ENCODE measurements at regions of chr11 and their contacts with region 1.

Region 1: GRCh38 chr11:34174412-34175041 is 69.1 kb downstream of the NAT10 start:
- DNase-seq: peak; percentile 84 to 90 (median 88)
- ATAC-seq: peak; percentile 99
- H3K4me3 ChIP-seq: peak overlapping the region; percentile 16; the same call in 1 of the 2 replicates
- H3K27ac ChIP-seq: no peak overlapping the region
- H3K4me1 ChIP-seq: peaks cover 2 to 18% of the 10 kb centered on the region in 2 experiments; a peak in 3 of 5 replicates
- H3K27me3 ChIP-seq: peaks cover 27 to 58% of the 10 kb centered on the region in 2 experiments; a peak in 4 of 5 replicates
- CTCF ChIP-seq: peak; percentile 88 to 97 (median 94)
- EP300 ChIP-seq: no peak
- POLR2A ChIP-seq: no peak
- RAD21 ChIP-seq: peak; percentile 97 to 99

Region 2: DNA sequence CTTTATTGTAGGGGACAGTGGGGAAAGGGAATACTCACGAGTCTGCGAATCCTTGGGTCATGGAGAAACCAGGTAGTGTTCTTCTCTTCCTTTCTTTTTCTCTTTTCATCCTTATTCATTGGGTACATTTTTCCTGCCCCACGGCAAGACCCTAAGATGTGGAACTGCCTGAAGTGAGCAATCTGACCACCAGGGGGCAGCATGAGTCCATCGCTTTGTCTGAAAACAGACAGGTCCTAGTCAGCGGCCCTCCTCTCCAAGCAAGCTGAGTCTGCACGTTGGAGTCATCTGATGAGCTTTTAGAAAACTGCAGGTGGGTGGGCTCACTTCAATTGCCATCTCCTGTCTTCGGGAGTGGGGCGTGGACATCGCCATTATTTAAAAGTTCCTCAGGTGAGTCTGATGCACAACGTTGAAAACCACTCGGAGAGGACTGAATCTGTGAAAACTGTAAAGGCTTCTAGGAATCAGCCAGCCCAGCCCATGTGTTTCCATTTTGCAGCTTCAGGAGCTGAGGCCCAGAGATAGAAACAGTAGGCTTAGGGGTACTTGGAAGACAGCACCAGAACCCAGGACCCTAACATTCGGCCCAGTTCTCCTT is 366.2 kb before region 1 on chr11:
- CTCF ChIA-PET with region 1: no interaction called
- POLR2A ChIA-PET with region 1: no interaction called
- in situ Hi-C with region 1: no loop called
- intact Hi-C with region 1: loop called (anchors 10 kb)
- DNase-seq: peak; percentile 79 to 90 (median 80)
- ATAC-seq: peak; percentile 99
- H3K4me3 ChIP-seq: no peak overlapping the region
- H3K27ac ChIP-seq: no peak overlapping the region
- H3K4me1 ChIP-seq: no peaks in the 10 kb centered on the region
- H3K27me3 ChIP-seq: peaks cover 9% of the 10 kb centered on the region in 2 experiments; a peak in 4 of 5 replicates
- CTCF ChIP-seq: peak; percentile 82 to 92 (median 92)
- EP300 ChIP-seq: no peak
- POLR2A ChIP-seq: no peak
- RAD21 ChIP-seq: peak; percentile 77 to 87

Region 3: DNA sequence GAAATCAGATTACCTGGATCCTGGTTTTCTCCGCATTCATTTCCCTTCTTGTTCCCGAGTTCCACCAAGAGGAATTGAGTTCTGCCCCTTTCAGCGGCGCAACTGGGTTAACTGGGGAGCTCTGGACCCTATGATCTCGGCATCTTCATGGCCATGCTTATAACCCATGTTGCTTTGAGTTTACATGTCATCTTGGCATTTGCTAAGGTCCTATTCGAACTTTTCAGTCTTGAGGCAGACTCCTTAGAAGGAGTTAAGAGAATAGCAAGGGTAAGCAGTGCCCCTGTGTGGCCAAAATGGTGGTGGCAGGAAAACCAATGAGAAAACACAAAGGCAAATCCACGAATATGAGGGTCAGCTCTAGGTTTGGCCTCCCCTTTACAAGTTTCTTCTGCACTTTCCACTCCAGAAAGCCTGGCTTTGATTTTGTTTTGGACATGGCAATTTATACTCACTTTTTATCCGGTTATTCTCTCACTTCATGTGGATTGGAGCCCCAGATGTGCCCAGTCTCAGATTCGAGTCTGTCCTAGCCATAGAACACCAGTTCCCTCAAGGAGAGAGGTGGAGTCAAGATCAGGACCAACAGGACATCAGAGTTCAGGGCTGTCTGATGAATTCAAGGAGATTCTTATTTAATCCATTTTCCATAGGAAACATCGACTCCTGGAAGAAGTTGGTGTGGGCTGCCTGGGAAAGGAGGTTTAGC is 344.9 kb before region 1 on chr11:
- CTCF ChIA-PET with region 1: no interaction called
- POLR2A ChIA-PET with region 1: no interaction called
- in situ Hi-C with region 1: loop called (anchors 25 kb)
- intact Hi-C with region 1: loop called (anchors 10 kb)
- DNase-seq: peak; percentile 51 to 77 (median 64)
- ATAC-seq: peak; percentile 94
- H3K4me3 ChIP-seq: no peak overlapping the region
- H3K27ac ChIP-seq: no peak overlapping the region
- H3K4me1 ChIP-seq: peaks cover 0 to 9% of the 10 kb centered on the region in 2 experiments; a peak in 2 of 5 replicates
- H3K27me3 ChIP-seq: peaks cover 32 to 49% of the 10 kb centered on the region in 2 experiments
- CTCF ChIP-seq: peak; percentile 81 to 94 (median 86)
- EP300 ChIP-seq: no peak
- POLR2A ChIP-seq: no peak
- RAD21 ChIP-seq: peak; percentile 85 to 90

Region 4: DNA sequence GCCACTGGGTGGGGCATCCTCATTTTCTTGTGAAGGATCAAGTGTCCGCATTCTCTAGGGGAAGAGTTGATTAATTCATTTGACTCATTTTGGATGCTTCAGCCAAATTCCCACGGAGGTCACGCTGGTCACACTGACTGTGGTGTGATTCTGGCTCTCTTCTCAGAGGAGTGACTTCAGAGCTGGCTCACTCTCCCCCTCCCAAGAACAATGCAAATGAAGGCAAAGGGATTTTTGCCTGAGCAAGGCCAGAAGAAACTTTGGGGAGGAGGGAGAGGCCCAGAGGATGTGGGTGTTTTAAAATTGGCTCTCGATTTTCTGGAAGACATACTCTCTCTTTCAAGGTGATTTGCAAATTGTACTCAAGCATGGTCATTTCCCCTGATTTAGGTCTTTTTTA is 231.6 kb before region 1 on chr11:
- CTCF ChIA-PET with region 1: no interaction called
- POLR2A ChIA-PET with region 1: no interaction called
- in situ Hi-C with region 1: no loop called
- intact Hi-C with region 1: no loop called
- DNase-seq: peak in 1 of 4 experiments; percentile 63
- ATAC-seq: no peak
- H3K4me3 ChIP-seq: no peak overlapping the region
- H3K27ac ChIP-seq: peak overlapping the region; percentile 98
- H3K4me1 ChIP-seq: peaks cover 51 to 75% of the 10 kb centered on the region in 2 experiments
- H3K27me3 ChIP-seq: no peaks in the 10 kb centered on the region
- CTCF ChIP-seq: no peak
- EP300 ChIP-seq: no peak
- POLR2A ChIP-seq: no peak
- RAD21 ChIP-seq: no peak

Region 5: DNA sequence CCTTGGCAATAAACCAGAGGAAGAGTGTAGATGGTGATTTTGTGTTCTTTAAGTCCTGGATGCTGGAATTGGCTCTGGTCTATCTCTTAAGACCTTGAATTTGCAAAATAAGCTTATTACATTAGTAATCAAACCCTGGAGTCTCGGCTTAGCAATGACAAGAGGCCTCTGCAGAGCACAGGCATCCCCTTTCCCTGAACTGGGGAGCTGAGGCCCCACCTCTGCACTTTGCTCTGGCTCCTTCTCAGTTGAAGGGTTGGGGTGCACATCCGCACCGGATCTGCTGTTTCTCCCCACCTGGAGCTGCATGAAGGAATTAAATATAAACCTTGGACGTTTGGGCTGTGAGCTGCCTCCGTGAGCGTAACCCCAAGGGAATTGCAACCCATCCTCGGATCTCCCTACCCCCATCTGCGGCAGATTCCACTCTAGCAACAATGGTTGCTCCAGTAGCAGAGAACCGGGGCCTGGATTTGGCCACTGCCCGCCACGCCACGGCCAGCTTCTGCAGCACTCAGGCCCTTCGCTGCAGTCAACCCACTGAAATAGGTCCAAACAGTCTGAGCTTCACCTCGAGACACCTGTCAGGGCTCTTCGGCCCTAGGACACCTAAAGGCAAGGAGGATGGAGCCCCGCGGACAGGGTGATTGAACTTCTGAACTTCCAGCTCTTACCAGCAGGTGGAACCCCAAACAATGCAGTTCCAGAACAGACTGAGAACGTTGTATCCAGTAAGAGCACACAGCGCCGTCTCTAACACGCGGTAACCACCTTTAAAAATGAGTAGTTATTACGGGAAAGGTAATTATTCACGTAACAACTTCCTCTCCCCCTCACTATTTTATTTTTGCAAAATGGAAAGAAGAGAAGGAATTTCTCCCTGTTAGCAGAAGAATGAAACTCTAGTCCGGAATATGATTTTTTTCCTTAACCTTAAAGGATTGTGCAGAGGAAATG is 177.8 kb before region 1 on chr11:
- CTCF ChIA-PET with region 1: no interaction called
- POLR2A ChIA-PET with region 1: no interaction called
- in situ Hi-C with region 1: no loop called
- intact Hi-C with region 1: loop called (anchors 5 kb)
- DNase-seq: peak; percentile 71 to 88 (median 74)
- ATAC-seq: peak; percentile 99
- H3K4me3 ChIP-seq: no peak overlapping the region
- H3K27ac ChIP-seq: no peak overlapping the region
- H3K4me1 ChIP-seq: peaks cover 3 to 8% of the 10 kb centered on the region in 2 experiments; a peak in 3 of 5 replicates
- H3K27me3 ChIP-seq: no peaks in the 10 kb centered on the region
- CTCF ChIP-seq: peak; percentile 91 to 92 (median 91)
- EP300 ChIP-seq: no peak
- POLR2A ChIP-seq: no peak
- RAD21 ChIP-seq: peak; percentile 79 to 89

Region 6: GRCh38 chr11:34134765-34135164 is 39.8 kb before region 1 on chr11:
- CTCF ChIA-PET with region 1: no interaction called
- POLR2A ChIA-PET with region 1: no interaction called
- in situ Hi-C with region 1: no loop called
- intact Hi-C with region 1: no loop called
- DNase-seq: no peak
- ATAC-seq: no peak
- H3K4me3 ChIP-seq: no peak overlapping the region
- H3K27ac ChIP-seq: no peak overlapping the region
- H3K4me1 ChIP-seq: no peaks in the 10 kb centered on the region
- H3K27me3 ChIP-seq: no peaks in the 10 kb centered on the region
- CTCF ChIP-seq: no peak
- EP300 ChIP-seq: no peak
- POLR2A ChIP-seq: no peak
- RAD21 ChIP-seq: no peak

Region 7: DNA sequence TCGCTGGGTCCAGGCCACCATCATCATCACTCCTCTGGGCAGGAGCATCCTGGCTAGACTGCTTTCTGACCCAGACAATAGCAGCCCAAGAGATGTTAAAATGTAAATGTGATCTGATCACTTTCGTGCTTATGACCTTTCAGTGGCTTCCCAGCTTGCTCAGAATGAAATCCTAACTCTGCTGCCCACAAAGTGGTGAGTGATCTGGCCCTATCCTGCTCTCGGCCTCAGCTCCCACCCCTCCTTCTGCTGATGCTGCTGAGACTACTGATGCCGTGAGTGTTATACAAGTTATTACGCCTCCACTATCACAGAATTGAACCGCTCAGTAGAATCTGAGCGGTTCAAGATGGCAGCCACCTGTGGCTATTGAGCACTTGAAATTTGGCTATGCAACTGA is 312.9 kb after region 1 on chr11:
- CTCF ChIA-PET with region 1: interaction called, 6 read pairs
- POLR2A ChIA-PET with region 1: no interaction called
- in situ Hi-C with region 1: loop called (anchors 5 kb)
- intact Hi-C with region 1: loop called (anchors 1 kb)
- DNase-seq: no peak
- ATAC-seq: no peak
- H3K4me3 ChIP-seq: no peak overlapping the region
- H3K27ac ChIP-seq: no peak overlapping the region
- H3K4me1 ChIP-seq: no peaks in the 10 kb centered on the region
- H3K27me3 ChIP-seq: peaks cover 0 to 26% of the 10 kb centered on the region in 2 experiments; a peak in 3 of 5 replicates
- CTCF ChIP-seq: no peak
- EP300 ChIP-seq: no peak
- POLR2A ChIP-seq: no peak
- RAD21 ChIP-seq: no peak

Region 8: DNA sequence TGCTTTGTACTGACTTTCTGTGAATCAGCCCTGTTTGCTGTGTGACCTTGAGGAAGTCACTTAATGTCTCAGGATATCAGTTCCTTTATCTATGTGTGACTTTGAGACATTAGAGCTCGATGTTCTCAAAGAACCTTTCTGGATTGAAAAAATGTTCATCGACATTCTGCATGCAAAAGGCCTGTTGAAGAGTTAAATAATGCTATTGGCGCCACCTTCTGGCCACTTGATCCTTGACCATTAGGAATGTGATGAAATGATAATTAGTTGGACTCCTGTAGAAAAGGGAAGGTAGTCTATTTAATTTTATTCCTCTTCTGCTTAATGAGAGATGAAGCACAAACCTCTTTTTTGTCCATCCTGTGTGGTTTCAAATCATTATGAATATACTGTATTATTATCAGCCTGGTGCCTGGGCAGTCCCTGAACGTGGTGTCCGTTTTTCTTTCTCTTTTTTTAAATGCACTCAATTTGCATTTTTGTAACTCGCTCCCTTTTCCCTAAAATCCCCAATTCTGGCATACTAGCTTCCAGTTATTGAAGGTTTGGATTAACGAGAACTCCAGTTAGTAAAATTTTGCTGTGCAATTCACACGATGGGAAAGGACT is 318.4 kb after region 1 on chr11:
- CTCF ChIA-PET with region 1: interaction called, 6 read pairs
- POLR2A ChIA-PET with region 1: no interaction called
- in situ Hi-C with region 1: loop called (anchors 5 kb)
- intact Hi-C with region 1: loop called (anchors 1 kb)
- DNase-seq: peak; percentile 58 to 82 (median 64)
- ATAC-seq: peak; percentile 84
- H3K4me3 ChIP-seq: no peak overlapping the region
- H3K27ac ChIP-seq: no peak overlapping the region
- H3K4me1 ChIP-seq: peaks cover 0 to 4% of the 10 kb centered on the region in 2 experiments; a peak in 2 of 5 replicates
- H3K27me3 ChIP-seq: peaks cover 7 to 44% of the 10 kb centered on the region in 2 experiments; a peak in 4 of 5 replicates
- CTCF ChIP-seq: peak; percentile 54 to 87 (median 69); a peak in 5 of 6 replicates
- EP300 ChIP-seq: no peak
- POLR2A ChIP-seq: no peak
- RAD21 ChIP-seq: peak; percentile 76 to 88